Caco-2 (cell line): ENCODE measurements at regions of chr2 and their contacts with region 1.

Region 1: GRCh38 chr2:88055371-88056128 is at the start of gene KRCC1:
- DNase-seq: peak; percentile 95 to 97
- H3K4me3 ChIP-seq: peak within 1 kb of the TSS; percentile 90
- H3K4me3 Mint-ChIP-seq: peak within 1 kb of the TSS; percentile 97
- H3K27ac Mint-ChIP-seq: peak within 1 kb of the TSS; percentile 94
- H3K4me1 ChIP-seq: peaks cover 16% of the 10 kb centered on the region
- H3K4me1 Mint-ChIP-seq: peaks cover 34% of the 10 kb centered on the region
- H3K27me3 ChIP-seq: no peaks in the 10 kb centered on the region
- H3K27me3 Mint-ChIP-seq: no peaks in the 10 kb centered on the region
- CTCF ChIP-seq: no peak
- total RNA-seq, gene KRCC1: 5.4 and 7.6 TPM in 2 replicates

Region 2: GRCh38 chr2:88114889-88115288 is 59.3 kb after region 1 on chr2:
- CTCF ChIA-PET with region 1: interaction called, 3 read pairs
- POLR2A ChIA-PET with region 1: no interaction called
- intact Hi-C with region 1: loop called (anchors 5 kb)
- DNase-seq: no peak
- H3K4me3 ChIP-seq: no peak overlapping the region
- H3K4me3 Mint-ChIP-seq: no peak overlapping the region
- H3K27ac Mint-ChIP-seq: no peak overlapping the region
- H3K4me1 ChIP-seq: peaks cover 4% of the 10 kb centered on the region; the same call in 1 of the 2 replicates
- H3K4me1 Mint-ChIP-seq: no peaks in the 10 kb centered on the region
- H3K27me3 ChIP-seq: no peaks in the 10 kb centered on the region
- H3K27me3 Mint-ChIP-seq: no peaks in the 10 kb centered on the region
- CTCF ChIP-seq: no peak

Region 3: GRCh38 chr2:88139203-88139702 is 83.7 kb after region 1 on chr2:
- CTCF ChIA-PET with region 1: interaction called, 34 read pairs
- POLR2A ChIA-PET with region 1: no interaction called
- intact Hi-C with region 1: no loop called
- DNase-seq: peak; percentile 74 to 80
- H3K4me3 ChIP-seq: no peak overlapping the region
- H3K4me3 Mint-ChIP-seq: no peak overlapping the region
- H3K27ac Mint-ChIP-seq: peak overlapping the region; percentile 51
- H3K4me1 ChIP-seq: peaks cover 31% of the 10 kb centered on the region
- H3K4me1 Mint-ChIP-seq: peaks cover 21% of the 10 kb centered on the region
- H3K27me3 ChIP-seq: no peaks in the 10 kb centered on the region
- H3K27me3 Mint-ChIP-seq: no peaks in the 10 kb centered on the region
- CTCF ChIP-seq: no peak

Region 4: GRCh38 chr2:88159955-88160415 is 104.4 kb after region 1 on chr2:
- CTCF ChIA-PET with region 1: interaction called, 146 read pairs
- POLR2A ChIA-PET with region 1: interaction called, 3 read pairs
- intact Hi-C with region 1: loop called (anchors 1 kb)
- DNase-seq: peak; percentile 73 to 76
- H3K4me3 ChIP-seq: no peak overlapping the region
- H3K4me3 Mint-ChIP-seq: no peak overlapping the region
- H3K27ac Mint-ChIP-seq: no peak overlapping the region
- H3K4me1 ChIP-seq: no peaks in the 10 kb centered on the region
- H3K4me1 Mint-ChIP-seq: no peaks in the 10 kb centered on the region
- H3K27me3 ChIP-seq: no peaks in the 10 kb centered on the region
- H3K27me3 Mint-ChIP-seq: no peaks in the 10 kb centered on the region
- CTCF ChIP-seq: peak; percentile 87 to 89

Region 5: DNA sequence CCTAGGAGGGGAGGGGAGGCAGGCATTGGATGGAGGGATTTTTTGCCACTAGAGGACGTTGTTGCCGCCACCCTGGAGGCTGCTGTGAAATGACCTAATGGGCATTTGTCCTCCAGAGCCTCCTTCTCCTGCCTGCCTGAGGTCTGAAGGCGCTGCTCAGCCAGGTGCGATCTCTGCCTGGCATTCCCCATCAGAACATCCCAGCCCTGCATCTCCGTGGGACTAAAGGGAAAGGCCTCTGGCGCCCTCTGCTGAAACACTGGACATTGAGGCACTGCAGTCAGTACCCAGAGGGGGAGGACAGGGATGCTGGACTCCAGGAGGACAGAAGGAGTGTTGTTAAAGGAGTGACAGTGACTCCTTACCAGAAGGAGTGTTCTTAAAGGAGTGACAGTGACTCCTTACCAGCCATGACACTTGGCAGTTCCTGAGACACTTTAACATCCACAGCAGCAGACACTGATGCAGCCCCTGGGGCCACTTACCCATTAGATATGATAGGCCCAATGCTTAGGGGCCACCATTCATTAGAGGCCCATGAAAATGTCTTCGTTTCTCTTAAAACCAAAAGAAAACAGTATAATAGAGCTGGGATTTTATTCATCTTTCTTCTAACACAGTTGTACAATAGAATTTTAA is 131.6 kb after region 1 on chr2:
- CTCF ChIA-PET with region 1: interaction called, 11 read pairs
- POLR2A ChIA-PET with region 1: no interaction called
- intact Hi-C with region 1: loop called (anchors 1 kb)
- DNase-seq: peak; percentile 82 to 83
- H3K4me3 ChIP-seq: no peak overlapping the region
- H3K4me3 Mint-ChIP-seq: no peak overlapping the region
- H3K27ac Mint-ChIP-seq: no peak overlapping the region
- H3K4me1 ChIP-seq: no peaks in the 10 kb centered on the region
- H3K4me1 Mint-ChIP-seq: no peaks in the 10 kb centered on the region
- H3K27me3 ChIP-seq: no peaks in the 10 kb centered on the region
- H3K27me3 Mint-ChIP-seq: no peaks in the 10 kb centered on the region
- CTCF ChIP-seq: peak; percentile 75 to 92